HepG2 (cell line): ENCODE measurements at regions of chr10 and their contacts with region 1.

Region 1: DNA sequence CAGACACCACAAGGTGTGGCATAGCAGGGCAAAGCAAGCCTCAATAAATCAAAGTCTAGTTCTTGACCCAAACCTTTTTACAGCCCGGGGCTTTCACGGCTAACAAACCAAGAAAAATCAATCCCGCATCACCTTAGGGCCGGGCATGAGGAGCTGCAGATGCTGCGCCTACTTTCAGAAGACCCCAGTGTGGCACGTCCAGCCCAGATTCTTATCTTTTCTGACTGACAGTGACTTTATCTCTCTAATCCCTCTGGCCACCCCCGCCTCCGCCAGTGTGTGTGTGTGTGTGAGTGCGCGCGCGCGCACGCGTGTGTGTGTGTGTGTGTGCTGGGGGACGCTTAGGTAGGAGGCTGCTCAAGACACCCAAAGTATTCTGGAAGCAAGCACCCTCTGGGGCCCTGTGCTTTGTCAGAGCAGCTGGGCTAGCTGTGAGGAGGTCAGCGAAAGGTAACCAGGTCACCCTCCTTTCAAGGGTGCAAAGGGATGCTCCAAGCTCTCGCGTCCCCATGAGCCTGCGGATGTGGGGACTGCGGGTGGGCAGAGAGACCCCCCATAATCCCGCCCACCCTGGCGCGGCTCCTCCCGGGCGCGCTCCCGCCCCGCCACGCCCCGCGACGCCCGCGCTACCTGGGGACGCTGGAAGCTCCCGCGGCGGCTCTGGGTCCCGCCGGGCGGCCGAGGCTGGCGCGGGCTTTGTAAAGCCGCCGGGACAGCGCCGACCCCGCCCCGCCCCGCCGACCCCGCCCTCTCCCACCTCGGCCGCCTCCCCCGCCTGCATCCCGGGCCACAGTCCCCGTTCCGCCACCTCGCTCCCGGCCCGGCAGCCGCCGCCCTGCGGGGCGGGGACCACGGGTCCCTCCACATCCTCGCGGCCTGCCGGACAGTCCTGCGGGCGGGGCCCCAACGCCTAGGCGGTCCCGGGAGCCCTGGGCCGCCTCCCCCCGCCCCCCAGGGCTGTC is 57.1 kb upstream of the RHOBTB1 start:
- DNase-seq: peak; percentile 71
- ATAC-seq: peak; percentile 95
- H3K4me3 ChIP-seq: peak overlapping the region; percentile 79 to 98 (median 92)
- H3K27ac ChIP-seq: peak overlapping the region; percentile 59
- H3K4me1 ChIP-seq: peaks cover 48% of the 10 kb centered on the region
- H3K27me3 ChIP-seq: no peaks in the 10 kb centered on the region
- CTCF ChIP-seq: no peak
- EP300 ChIP-seq: no peak
- POLR2A ChIP-seq: peak; percentile 22 to 49; a peak in 1 of 4 replicates
- RAD21 ChIP-seq: 0 out of 2 replicates have a peak, but pooled peaks have one; percentile 10

Region 2: DNA sequence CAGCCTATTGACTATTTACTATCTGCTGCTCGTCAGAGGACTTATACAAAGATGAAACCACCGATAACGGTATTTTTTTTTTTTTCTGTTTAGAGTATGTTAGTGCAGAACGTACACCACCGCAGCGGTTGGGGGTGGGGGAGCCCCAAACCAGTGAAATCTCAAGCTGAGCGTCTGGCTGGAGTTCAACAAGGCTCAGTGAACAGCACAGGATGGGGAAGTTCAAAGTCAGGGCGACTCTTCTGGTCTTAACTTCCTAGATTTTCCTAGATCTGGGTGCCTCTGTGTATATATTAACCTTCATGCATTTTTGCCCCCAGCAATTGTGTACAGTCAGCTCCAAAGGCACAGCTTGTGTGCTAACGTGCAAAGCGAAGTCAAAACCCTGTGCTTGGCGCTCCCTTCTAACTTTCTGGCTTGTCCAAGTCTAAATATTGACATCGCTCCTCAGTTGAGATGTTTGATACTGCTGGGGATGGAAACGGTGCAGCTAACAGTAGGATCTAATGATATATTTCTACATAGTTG is 58.2 kb before region 1 on chr10:
- CTCF ChIA-PET with region 1: no interaction called
- POLR2A ChIA-PET with region 1: no interaction called
- in situ Hi-C with region 1: no loop called
- intact Hi-C with region 1: no loop called
- DNase-seq: no peak
- ATAC-seq: peak; percentile 27
- H3K4me3 ChIP-seq: peak overlapping the region; percentile 59 to 71 (median 69)
- H3K27ac ChIP-seq: peak overlapping the region; percentile 78
- H3K4me1 ChIP-seq: peaks cover 26% of the 10 kb centered on the region
- H3K27me3 ChIP-seq: no peaks in the 10 kb centered on the region; a peak in 1 of 5 replicates
- CTCF ChIP-seq: no peak
- EP300 ChIP-seq: no peak
- POLR2A ChIP-seq: no peak; a peak in 1 of 4 replicates
- RAD21 ChIP-seq: no peak

Region 3: DNA sequence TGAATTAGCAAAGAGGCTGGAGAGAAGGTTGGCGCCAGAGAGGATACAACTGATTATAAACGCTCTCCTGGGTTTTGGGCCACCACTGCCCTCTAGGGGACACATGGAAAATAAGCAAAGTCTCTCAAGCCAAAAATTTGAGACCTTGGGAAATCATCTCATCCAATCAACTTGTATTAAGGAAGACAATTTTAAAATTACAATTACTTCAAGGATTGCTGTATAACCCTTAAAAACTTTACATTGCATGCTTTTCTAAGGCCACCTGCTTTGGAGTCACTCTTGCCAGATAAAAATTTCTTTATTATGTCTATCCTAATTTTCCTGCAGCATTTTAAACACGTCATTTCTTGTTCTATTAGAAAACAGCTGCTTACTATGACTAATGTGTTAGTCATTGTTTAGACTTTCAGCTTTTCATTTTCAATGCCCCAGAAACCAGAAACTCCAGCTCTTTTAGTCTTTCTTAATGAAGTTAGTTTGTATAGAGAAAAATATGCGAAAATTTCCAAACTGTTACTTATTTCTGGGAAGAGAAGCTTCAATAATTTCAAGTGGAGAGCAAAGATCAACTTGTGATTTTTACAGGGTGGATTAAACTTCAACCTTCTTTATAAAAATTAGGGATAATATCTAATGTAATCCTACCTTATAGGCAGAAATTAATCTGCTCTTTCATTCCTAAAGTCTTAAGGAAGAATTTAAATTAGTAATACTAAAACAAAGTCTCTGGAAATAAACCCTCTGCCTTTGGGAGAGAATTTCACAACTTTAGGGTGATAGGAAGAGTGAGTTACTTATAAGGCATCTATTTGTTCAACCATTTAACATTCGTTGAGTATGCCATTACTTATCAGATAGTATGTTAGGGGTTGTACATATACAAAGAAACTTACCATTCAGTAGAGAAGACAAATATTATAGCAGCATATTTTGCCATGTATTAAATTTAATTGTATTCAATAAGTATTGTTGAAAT is 36.5 kb before region 1 on chr10:
- CTCF ChIA-PET with region 1: no interaction called
- POLR2A ChIA-PET with region 1: no interaction called
- in situ Hi-C with region 1: no loop called
- intact Hi-C with region 1: loop called (anchors 5 kb)
- DNase-seq: peak; percentile 63
- ATAC-seq: peak; percentile 56; the same call in 2 of the 3 replicates
- H3K4me3 ChIP-seq: no peak overlapping the region
- H3K27ac ChIP-seq: no peak overlapping the region
- H3K4me1 ChIP-seq: peaks cover 44% of the 10 kb centered on the region
- H3K27me3 ChIP-seq: no peaks in the 10 kb centered on the region
- CTCF ChIP-seq: peak; percentile 74
- EP300 ChIP-seq: no peak
- POLR2A ChIP-seq: no peak
- RAD21 ChIP-seq: peak; percentile 59

Region 4: GRCh38 chr10:60978287-60979115 is 22.5 kb before region 1 on chr10:
- CTCF ChIA-PET with region 1: no interaction called
- POLR2A ChIA-PET with region 1: interaction called, 4 read pairs
- in situ Hi-C with region 1: no loop called
- intact Hi-C with region 1: loop called (anchors 2 kb)
- DNase-seq: peak; percentile 89
- ATAC-seq: peak; percentile 96
- H3K4me3 ChIP-seq: peak overlapping the region in 2 of 3 experiments; percentile 31 to 39; a peak in 2 of 6 replicates
- H3K27ac ChIP-seq: peak overlapping the region; percentile 87
- H3K4me1 ChIP-seq: peaks cover 67% of the 10 kb centered on the region
- H3K27me3 ChIP-seq: no peaks in the 10 kb centered on the region
- CTCF ChIP-seq: no peak
- EP300 ChIP-seq: 0 out of 4 replicates have a peak, but pooled peaks of 1 of the 2 experiments have one; percentile 25
- POLR2A ChIP-seq: no peak
- RAD21 ChIP-seq: no peak

Region 5: DNA sequence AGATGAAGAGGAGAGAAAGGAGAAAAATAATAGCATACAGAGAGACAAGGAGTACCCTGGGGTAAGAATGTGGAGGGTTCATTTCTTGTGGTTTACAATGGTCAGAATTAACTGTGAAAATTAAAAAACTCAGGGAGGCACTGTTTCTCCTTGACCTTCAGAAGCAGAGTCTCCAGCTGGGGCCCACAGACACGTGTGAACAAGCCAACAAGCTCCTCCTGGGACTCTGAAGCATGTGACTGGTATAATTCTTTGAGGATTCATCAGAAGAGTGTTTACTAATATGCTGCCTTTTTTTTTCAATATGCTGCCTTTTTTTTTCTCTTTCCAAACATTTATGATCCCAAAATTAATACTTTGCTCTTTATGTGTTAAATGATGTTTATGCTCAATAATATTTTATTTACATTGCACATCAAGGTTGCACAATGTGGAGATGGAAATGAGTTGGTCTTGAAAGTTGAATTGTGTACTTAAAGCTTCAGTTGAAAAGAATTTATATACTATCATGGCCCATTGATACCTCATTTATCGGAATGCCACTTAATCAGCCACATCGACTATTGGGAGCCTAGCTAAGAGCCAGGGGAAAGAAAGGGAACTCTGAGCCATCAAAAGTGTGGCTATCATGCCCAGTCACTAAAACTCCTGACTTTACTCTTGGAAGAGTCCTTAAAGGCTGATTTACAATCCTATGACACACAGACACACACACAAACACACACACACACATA is 77.7 kb after region 1 on chr10:
- CTCF ChIA-PET with region 1: no interaction called
- POLR2A ChIA-PET with region 1: no interaction called
- in situ Hi-C with region 1: no loop called
- intact Hi-C with region 1: loop called (anchors 5 kb)
- DNase-seq: no peak
- ATAC-seq: no peak
- H3K4me3 ChIP-seq: no peak overlapping the region
- H3K27ac ChIP-seq: no peak overlapping the region
- H3K4me1 ChIP-seq: peaks cover 38% of the 10 kb centered on the region
- H3K27me3 ChIP-seq: no peaks in the 10 kb centered on the region
- CTCF ChIP-seq: no peak
- EP300 ChIP-seq: no peak
- POLR2A ChIP-seq: no peak
- RAD21 ChIP-seq: no peak